ENCODE measurements at regions of chr3 and their contacts with region 1.

Region 1: GRCh38 chr3:122514123-122515019 is at the start of gene KPNA1:
- DNase-seq: peak; percentile 65
- ATAC-seq: peak; percentile 94
- H3K4me3 ChIP-seq: peak within 1 kb of the TSS; percentile 82
- H3K27ac ChIP-seq: peak within 1 kb of the TSS; percentile 71
- H3K4me1 ChIP-seq: no peaks in the 10 kb centered on the region; the same call in 1 of the 2 replicates
- H3K27me3 ChIP-seq: no peaks in the 10 kb centered on the region
- CTCF ChIP-seq: no peak
- EP300 ChIP-seq: 0 out of 4 replicates have a peak, but pooled peaks of 1 of the 2 experiments have one; percentile 6
- POLR2A ChIP-seq: peak; percentile 99
- RAD21 ChIP-seq: no peak
- polyA plus RNA-seq, gene KPNA1: 8.5 to 8.8 TPM

Region 2: GRCh38 chr3:122468896-122469533 is 45.4 kb before region 1 on chr3:
- CTCF ChIA-PET with region 1: interaction called, 7 read pairs
- POLR2A ChIA-PET with region 1: interaction called, 9 read pairs
- RAD21 ChIA-PET with region 1: interaction called, 14 read pairs
- SMC1A ChIA-PET with region 1: interaction called, 31 read pairs
- in situ Hi-C with region 1: no loop called
- intact Hi-C with region 1: no loop called
- DNase-seq: peak; percentile 30
- ATAC-seq: peak; percentile 88
- H3K4me3 ChIP-seq: no peak overlapping the region
- H3K27ac ChIP-seq: peak overlapping the region; percentile 53
- H3K4me1 ChIP-seq: peaks cover 16% of the 10 kb centered on the region
- H3K27me3 ChIP-seq: no peaks in the 10 kb centered on the region
- CTCF ChIP-seq: no peak
- EP300 ChIP-seq: no peak; a peak in 1 of 4 replicates
- POLR2A ChIP-seq: no peak
- RAD21 ChIP-seq: no peak

Region 3: GRCh38 chr3:122497425-122497824 is 16.9 kb before region 1 on chr3:
- CTCF ChIA-PET with region 1: interaction called, 13 read pairs
- POLR2A ChIA-PET with region 1: interaction called, 6 read pairs
- RAD21 ChIA-PET with region 1: interaction called, 6 read pairs
- SMC1A ChIA-PET with region 1: interaction called, 27 read pairs
- in situ Hi-C with region 1: no loop called
- intact Hi-C with region 1: no loop called
- DNase-seq: peak; percentile 72
- ATAC-seq: peak; percentile 97
- H3K4me3 ChIP-seq: no peak overlapping the region
- H3K27ac ChIP-seq: peak overlapping the region; percentile 64; the same call in 1 of the 2 replicates
- H3K4me1 ChIP-seq: peaks cover 14% of the 10 kb centered on the region
- H3K27me3 ChIP-seq: no peaks in the 10 kb centered on the region
- CTCF ChIP-seq: no peak
- EP300 ChIP-seq: peak; percentile 24 to 27; a peak in 1 of 4 replicates
- POLR2A ChIP-seq: no peak
- RAD21 ChIP-seq: no peak

Region 4: DNA sequence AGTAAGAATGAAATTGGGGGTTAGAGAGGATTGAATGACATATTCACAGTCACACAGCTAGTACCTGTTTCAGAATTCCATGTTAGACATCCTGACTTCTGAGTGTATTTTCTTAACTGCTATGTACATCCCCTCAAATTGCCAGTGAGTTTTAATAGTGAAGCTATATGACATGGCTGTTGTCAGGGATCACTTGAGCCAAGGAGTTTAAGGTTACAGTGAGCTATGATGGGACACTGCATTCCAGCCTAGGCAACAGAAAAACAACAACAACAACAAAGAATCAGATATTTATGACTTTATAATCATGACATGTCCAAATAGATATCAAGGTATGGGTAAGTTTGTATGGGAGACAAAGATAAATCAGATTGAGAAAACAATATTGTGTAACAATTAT is 79.7 kb after region 1 on chr3:
- CTCF ChIA-PET with region 1: no interaction called
- POLR2A ChIA-PET with region 1: no interaction called
- RAD21 ChIA-PET with region 1: no interaction called
- SMC1A ChIA-PET with region 1: no interaction called
- in situ Hi-C with region 1: no loop called
- intact Hi-C with region 1: no loop called
- DNase-seq: no peak
- ATAC-seq: no peak
- H3K4me3 ChIP-seq: no peak overlapping the region
- H3K27ac ChIP-seq: no peak overlapping the region
- H3K4me1 ChIP-seq: peaks cover 6% of the 10 kb centered on the region; the same call in 1 of the 2 replicates
- H3K27me3 ChIP-seq: no peaks in the 10 kb centered on the region
- CTCF ChIP-seq: no peak
- EP300 ChIP-seq: no peak
- POLR2A ChIP-seq: no peak
- RAD21 ChIP-seq: no peak